Left ventricle myocardium superior (tissue), 1 donor: ENCODE measurements at regions of chr2 and their contacts with region 1.

Region 1: GRCh38 chr2:237674731-237675276 is 47.4 kb downstream of the LRRFIP1 start:
- DNase-seq: peak; percentile 87
- ATAC-seq: peak; percentile 82

Region 2: GRCh38 chr2:237603718-237604362 is 71.0 kb before region 1 on chr2:
- intact Hi-C with region 1: loop called (anchors 10 kb)
- DNase-seq: no peak
- ATAC-seq: no peak

Region 3: DNA sequence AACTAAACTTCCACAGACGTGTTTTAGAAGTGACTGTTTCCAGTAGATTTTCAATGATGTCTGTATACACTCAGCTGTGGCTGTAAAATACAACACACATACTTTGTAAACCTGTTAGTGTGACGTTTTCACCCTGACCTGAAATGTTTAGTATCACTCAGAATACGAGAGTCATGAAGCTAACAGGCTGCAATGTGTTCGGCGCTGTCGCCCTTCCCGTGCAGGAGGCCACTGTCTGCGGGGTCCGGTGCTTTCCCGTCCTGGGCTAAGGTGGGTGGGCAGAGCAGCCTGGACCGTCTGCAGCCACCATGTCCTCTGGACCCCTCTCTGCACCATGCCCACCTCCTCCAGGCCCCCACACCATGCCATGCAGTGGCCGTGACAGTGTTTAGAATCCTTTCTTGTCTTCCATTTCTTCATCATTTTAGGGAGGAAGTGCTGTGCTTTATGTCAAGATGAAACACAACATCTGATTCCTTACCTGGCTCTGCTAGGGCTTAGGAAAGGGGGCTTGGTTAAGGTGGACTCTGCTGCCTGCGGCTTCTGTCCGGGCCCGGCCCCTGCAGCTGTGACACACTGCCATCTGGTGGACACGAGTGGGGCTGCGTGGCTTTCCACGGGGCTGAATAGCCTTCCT is 69.9 kb after region 1 on chr2:
- intact Hi-C with region 1: loop called (anchors 5 kb)
- DNase-seq: peak; percentile 86
- ATAC-seq: peak; percentile 80